Heart right ventricle (tissue), 16 donors: ENCODE measurements at regions of chr10 and their contacts with region 1.

Region 1: DNA sequence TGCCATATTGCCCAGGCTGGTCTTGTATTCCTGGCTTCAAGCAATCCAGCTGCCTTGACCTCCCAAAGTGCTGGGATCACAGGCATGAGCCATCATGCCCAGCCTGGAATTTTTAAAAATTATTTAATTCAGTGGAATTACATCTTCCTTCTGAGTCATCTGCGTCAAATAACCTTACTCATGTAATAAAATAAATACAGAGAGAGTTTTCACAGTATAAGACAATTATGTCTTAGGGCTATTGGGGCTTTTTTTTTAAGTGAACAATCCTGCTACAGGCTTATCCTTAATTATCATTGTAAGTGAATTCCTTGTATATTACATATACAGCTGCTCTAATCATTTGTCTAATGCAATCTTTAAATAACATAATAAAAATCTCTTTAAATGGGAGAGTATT is 108.3 kb downstream of the MAPK8 start:
- DNase-seq: no peak
- ATAC-seq: no peak
- H3K4me3 ChIP-seq: no peak overlapping the region
- H3K27ac ChIP-seq: no peak overlapping the region
- H3K4me1 ChIP-seq: peaks cover 0 to 18% (median 0%) of the 10 kb centered on the region in 9 donors
- H3K27me3 ChIP-seq: no peaks in the 10 kb centered on the region
- CTCF ChIP-seq: no peak

Region 2: DNA sequence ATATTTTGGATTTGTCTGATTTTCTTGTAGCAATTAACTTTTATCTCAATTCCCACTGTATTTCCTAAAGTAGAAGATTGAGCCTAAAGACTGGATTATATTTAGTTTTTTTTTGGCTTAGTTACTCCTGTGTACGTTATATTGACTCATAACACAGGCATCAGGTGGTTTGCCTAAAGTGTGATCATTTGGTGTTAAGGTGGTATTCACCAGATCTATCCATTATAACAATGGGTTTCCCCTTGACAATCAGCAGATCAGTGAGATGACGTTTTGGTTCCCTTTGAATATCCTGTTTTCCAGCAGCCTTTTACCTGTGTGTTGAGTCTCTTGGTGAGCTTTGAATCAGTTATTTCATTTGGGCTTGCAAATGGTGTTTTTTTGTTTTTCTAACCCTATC is 90.2 kb before region 1 on chr10:
- intact Hi-C with region 1: loop called in 1 of 10 experiments (anchors 10 kb)
- DNase-seq: no peak
- ATAC-seq: no peak
- H3K4me3 ChIP-seq: no peak overlapping the region
- H3K27ac ChIP-seq: no peak overlapping the region
- H3K4me1 ChIP-seq: peaks cover 0 to 17% (median 7%) of the 10 kb centered on the region in 9 donors
- H3K27me3 ChIP-seq: no peaks in the 10 kb centered on the region
- CTCF ChIP-seq: no peak

Region 3: GRCh38 chr10:48363617-48364355 is 51.0 kb before region 1 on chr10:
- intact Hi-C with region 1: loop called in 1 of 10 experiments (anchors 5 kb)
- DNase-seq: peak in 1 of 2 donors; percentile 52
- ATAC-seq: peak in 7 of 8 donors; percentile 51 to 88 (median 73)
- H3K4me3 ChIP-seq: no peak overlapping the region
- H3K27ac ChIP-seq: peak overlapping the region in 6 of 10 donors; percentile 3 to 71 (median 42)
- H3K4me1 ChIP-seq: peaks cover 0 to 60% (median 43%) of the 10 kb centered on the region in 9 donors
- H3K27me3 ChIP-seq: no peaks in the 10 kb centered on the region
- CTCF ChIP-seq: peak; percentile 50 to 85 (median 74)

Region 4: DNA sequence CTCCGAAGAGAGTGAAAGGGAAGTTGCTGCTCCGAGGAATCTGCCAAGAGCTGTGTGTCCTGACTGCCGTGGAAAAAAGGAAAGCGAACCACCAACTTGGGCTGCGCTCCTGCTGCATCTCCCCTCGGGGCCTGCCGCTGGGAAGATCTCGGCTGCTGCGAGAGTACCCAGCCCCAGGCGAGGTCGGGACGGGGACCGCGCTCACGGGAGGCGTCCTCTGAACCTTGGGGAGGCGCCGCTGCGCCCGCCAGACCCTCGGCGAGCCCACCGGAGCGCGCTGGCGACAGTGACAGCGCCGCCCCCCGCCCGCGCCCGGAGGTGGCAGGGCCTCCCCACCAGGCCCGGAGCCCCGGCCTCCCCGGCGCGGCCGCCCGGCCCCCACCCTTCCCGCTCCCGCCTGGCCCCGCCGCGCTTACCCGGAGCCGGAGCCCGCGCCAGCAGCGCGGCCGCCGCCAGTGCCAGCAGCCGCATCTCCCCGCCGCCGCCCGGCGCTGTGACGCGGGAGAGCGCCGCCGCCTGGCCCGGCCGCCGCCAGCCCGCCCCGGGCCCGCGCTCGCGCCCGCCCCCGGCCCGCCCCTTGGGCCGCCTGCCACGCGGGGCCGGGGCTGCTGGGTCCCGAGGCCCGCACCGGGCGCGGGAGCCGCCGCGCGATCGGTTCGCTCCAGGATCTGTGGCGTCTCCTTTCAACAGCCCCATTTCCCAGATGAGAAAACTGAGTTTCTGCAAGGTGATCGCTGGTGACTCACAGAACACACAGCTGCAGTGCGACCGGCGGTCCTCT is 700.4 kb after region 1 on chr10 and contains the start of gene VSTM4:
- intact Hi-C with region 1: no loop called
- DNase-seq: peak; percentile 41 to 68
- ATAC-seq: peak; percentile 22 to 73 (median 51)
- H3K4me3 ChIP-seq: peak within 1 kb of the TSS; percentile 11 to 79 (median 66)
- H3K27ac ChIP-seq: peak within 1 kb of the TSS in 9 of 10 donors; percentile 74 to 89 (median 87)
- H3K4me1 ChIP-seq: peaks cover 3 to 60% (median 45%) of the 10 kb centered on the region in 9 donors
- H3K27me3 ChIP-seq: peaks cover 0 to 12% (median 0%) of the 10 kb centered on the region in 7 donors
- CTCF ChIP-seq: peak in 4 of 9 donors; percentile 18 to 36 (median 23)
- total RNA-seq, gene VSTM4: 12.0 to 26.7 (median 18.1) TPM